SK-N-SH (cell line): ENCODE measurements at regions of chr2 and their contacts with region 1.

Region 1: GRCh38 chr2:241775223-241776177 is 1.1 kb upstream of the GAL3ST2 start:
- DNase-seq: peak; percentile 36
- H3K4me3 ChIP-seq: no peak overlapping the region
- H3K27ac ChIP-seq: no peak overlapping the region
- H3K4me1 ChIP-seq: peaks cover 8 to 20% of the 10 kb centered on the region in 2 experiments; a peak in 2 of 4 replicates
- H3K27me3 ChIP-seq: no peaks in the 10 kb centered on the region
- CTCF ChIP-seq: no peak
- EP300 ChIP-seq: no peak
- RAD21 ChIP-seq: no peak

Region 2: GRCh38 chr2:241762933-241763369 is 12.5 kb before region 1 on chr2:
- CTCF ChIA-PET with region 1: interaction called, 13 read pairs
- POLR2A ChIA-PET with region 1: no interaction called
- DNase-seq: peak; percentile 45
- H3K4me3 ChIP-seq: no peak overlapping the region
- H3K27ac ChIP-seq: peak overlapping the region in 1 of 2 experiments; percentile 53; a peak in 2 of 4 replicates
- H3K4me1 ChIP-seq: peaks cover 0 to 32% of the 10 kb centered on the region in 2 experiments; a peak in 1 of 4 replicates
- H3K27me3 ChIP-seq: no peaks in the 10 kb centered on the region
- CTCF ChIP-seq: no peak
- EP300 ChIP-seq: no peak
- RAD21 ChIP-seq: no peak

Region 3: GRCh38 chr2:241788572-241788971 is 13.1 kb after region 1 on chr2:
- CTCF ChIA-PET with region 1: no interaction called
- POLR2A ChIA-PET with region 1: no interaction called
- DNase-seq: no peak
- H3K4me3 ChIP-seq: no peak overlapping the region
- H3K27ac ChIP-seq: no peak overlapping the region
- H3K4me1 ChIP-seq: no peaks in the 10 kb centered on the region
- H3K27me3 ChIP-seq: no peaks in the 10 kb centered on the region
- CTCF ChIP-seq: no peak
- EP300 ChIP-seq: no peak
- RAD21 ChIP-seq: no peak

Region 4: GRCh38 chr2:241855888-241856422 is 80.5 kb after region 1 on chr2:
- CTCF ChIA-PET with region 1: no interaction called
- POLR2A ChIA-PET with region 1: no interaction called
- DNase-seq: peak; percentile 30
- H3K4me3 ChIP-seq: no peak overlapping the region
- H3K27ac ChIP-seq: no peak overlapping the region
- H3K4me1 ChIP-seq: peaks cover 12 to 19% of the 10 kb centered on the region in 2 experiments; a peak in 3 of 4 replicates
- H3K27me3 ChIP-seq: no peaks in the 10 kb centered on the region
- CTCF ChIP-seq: no peak
- EP300 ChIP-seq: no peak
- RAD21 ChIP-seq: no peak